WTC11 (cell line): ENCODE measurements at regions of chr14 and their contacts with region 1.

Region 1: GRCh38 chr14:92686900-92687444 is 61.5 kb downstream of the LGMN start:
- DNase-seq: peak; percentile 94
- ATAC-seq: peak; percentile 83
- H3K4me3 Mint-ChIP-seq: peak overlapping the region; percentile 45
- H3K27ac Mint-ChIP-seq: no peak overlapping the region
- H3K4me1 Mint-ChIP-seq: no peaks in the 10 kb centered on the region
- H3K27me3 Mint-ChIP-seq: peaks cover 25% of the 10 kb centered on the region
- CTCF ChIP-seq: peak; percentile 99

Region 2: GRCh38 chr14:92589213-92589852 is 97.6 kb before region 1 on chr14:
- CTCF ChIA-PET with region 1: interaction called, 32 read pairs
- POLR2A ChIA-PET with region 1: no interaction called
- DNase-seq: no peak
- ATAC-seq: peak; percentile 47; the same call in 1 of the 2 replicates
- H3K4me3 Mint-ChIP-seq: no peak overlapping the region
- H3K27ac Mint-ChIP-seq: no peak overlapping the region
- H3K4me1 Mint-ChIP-seq: no peaks in the 10 kb centered on the region
- H3K27me3 Mint-ChIP-seq: peaks cover 2% of the 10 kb centered on the region; the same call in 1 of the 2 replicates
- CTCF ChIP-seq: no peak

Region 3: DNA sequence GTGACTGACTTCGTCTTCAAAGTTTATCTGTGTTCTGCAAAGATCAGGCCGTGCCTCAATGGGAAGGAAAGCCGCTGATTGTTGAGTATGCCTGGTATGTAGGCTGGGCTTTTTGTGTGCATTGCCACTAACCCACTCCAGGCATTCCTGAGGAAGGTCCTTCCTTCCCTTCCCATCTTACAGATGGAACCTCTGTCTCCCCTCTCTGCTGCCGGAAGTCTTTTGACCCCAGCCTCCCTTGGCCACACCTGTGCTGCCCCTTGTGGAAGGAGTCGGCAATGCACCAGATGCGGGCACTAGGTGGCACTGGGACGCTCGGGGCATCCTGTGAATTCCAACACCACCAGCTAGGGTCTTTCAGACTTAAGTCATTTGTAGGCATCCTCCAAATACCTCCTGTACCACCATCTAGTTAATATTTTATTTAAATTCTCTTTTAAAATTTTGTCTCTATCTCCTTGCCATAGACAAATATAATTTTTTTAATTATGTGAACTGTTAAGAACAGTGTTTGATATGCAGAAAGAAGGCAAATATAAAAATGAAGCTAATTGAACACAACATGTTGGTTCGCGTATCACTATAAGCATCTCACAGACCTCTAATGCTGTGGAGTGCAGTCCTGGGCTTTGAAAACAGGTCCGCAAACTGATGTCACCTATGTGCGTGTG is 73.8 kb before region 1 on chr14:
- CTCF ChIA-PET with region 1: interaction called, 16 read pairs
- POLR2A ChIA-PET with region 1: no interaction called
- DNase-seq: peak; percentile 89
- ATAC-seq: peak; percentile 93
- H3K4me3 Mint-ChIP-seq: no peak overlapping the region
- H3K27ac Mint-ChIP-seq: no peak overlapping the region
- H3K4me1 Mint-ChIP-seq: peaks cover 13% of the 10 kb centered on the region
- H3K27me3 Mint-ChIP-seq: no peaks in the 10 kb centered on the region; the same call in 1 of the 2 replicates
- CTCF ChIP-seq: peak; percentile 89

Region 4: GRCh38 chr14:92709340-92710000 is 22.5 kb after region 1 on chr14:
- CTCF ChIA-PET with region 1: interaction called, 12 read pairs
- POLR2A ChIA-PET with region 1: interaction called, 3 read pairs
- DNase-seq: no peak
- ATAC-seq: no peak
- H3K4me3 Mint-ChIP-seq: no peak overlapping the region
- H3K27ac Mint-ChIP-seq: peak overlapping the region; percentile 82; the same call in 1 of the 2 replicates
- H3K4me1 Mint-ChIP-seq: peaks cover 2% of the 10 kb centered on the region; the same call in 1 of the 2 replicates
- H3K27me3 Mint-ChIP-seq: no peaks in the 10 kb centered on the region
- CTCF ChIP-seq: no peak

Region 5: DNA sequence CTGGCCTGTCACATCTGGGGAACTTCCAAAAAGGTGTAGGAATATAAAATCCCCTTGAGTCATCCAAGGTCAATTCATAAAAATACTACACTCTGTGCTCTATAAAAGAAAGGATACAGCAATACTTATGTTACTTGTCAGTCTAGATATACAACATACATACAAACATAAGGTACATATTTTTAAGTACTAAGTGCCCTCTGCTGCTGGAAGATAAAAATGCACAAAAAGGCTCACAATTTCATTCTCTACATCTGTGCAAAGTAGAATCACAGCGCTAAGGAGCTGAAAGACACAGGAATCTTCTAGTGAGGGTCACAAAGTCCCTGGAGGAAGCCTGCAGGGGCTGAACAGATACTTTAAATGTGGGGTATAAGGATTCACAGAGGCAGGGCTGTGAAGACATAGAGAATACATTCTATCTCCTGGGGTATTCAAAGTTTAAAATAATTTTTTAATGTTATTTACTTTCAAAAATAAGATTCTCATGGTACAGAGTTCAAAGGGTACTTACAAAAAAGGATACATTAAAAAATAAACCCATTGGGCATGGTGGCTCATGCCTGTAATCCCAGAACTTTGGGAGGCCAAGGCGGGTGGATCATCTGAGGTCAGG is 97.0 kb after region 1 on chr14:
- CTCF ChIA-PET with region 1: interaction called, 18 read pairs
- POLR2A ChIA-PET with region 1: no interaction called
- DNase-seq: no peak
- ATAC-seq: peak; percentile 63
- H3K4me3 Mint-ChIP-seq: no peak overlapping the region
- H3K27ac Mint-ChIP-seq: no peak overlapping the region
- H3K4me1 Mint-ChIP-seq: peaks cover 10% of the 10 kb centered on the region
- H3K27me3 Mint-ChIP-seq: peaks cover 4% of the 10 kb centered on the region
- CTCF ChIP-seq: no peak

Region 6: GRCh38 chr14:92848887-92849286 is 161.9 kb after region 1 on chr14:
- CTCF ChIA-PET with region 1: no interaction called
- POLR2A ChIA-PET with region 1: no interaction called
- DNase-seq: no peak
- ATAC-seq: no peak
- H3K4me3 Mint-ChIP-seq: no peak overlapping the region
- H3K27ac Mint-ChIP-seq: no peak overlapping the region
- H3K4me1 Mint-ChIP-seq: no peaks in the 10 kb centered on the region
- H3K27me3 Mint-ChIP-seq: peaks cover 14% of the 10 kb centered on the region
- CTCF ChIP-seq: no peak